Panc1 (cell line): ENCODE measurements at regions of chr7 and their contacts with region 1.

Region 1: DNA sequence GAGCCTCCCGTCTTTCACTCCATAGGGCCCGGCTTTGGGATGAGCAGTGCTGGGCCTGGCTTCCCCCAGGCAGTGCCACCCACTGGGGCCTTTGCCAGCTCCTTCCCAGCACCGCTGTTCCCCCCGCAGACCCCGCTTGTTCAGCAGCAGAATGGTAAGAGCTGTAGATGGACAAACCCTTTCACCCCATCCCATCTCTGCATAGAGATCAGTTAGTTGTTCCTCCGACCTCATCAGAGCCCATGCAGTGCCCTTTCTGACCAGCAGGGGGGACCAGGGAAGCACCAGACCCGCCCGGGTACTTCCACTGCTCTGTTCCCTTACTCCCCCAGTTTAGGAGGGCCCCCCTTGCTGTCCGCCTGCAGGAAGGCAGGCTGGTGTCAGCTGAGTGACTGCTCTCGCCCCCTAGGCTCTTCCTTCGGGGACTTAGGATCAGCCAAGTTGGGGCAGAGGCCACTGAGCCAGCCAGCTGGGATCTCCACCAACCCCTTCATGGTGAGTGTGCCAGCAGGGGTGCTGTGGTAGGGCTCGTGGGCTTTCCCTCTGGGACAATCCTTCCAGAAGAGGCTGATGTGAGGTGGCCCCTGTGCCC is 9.8 kb downstream of the SAP25 start:
- DNase-seq: peak; percentile 53
- ATAC-seq: peak; percentile 71
- H3K4me3 ChIP-seq: no peak overlapping the region
- H3K27ac ChIP-seq: 0 out of 2 replicates have a peak overlapping the region, but pooled peaks have one; percentile 17
- H3K4me1 ChIP-seq: peaks cover 23% of the 10 kb centered on the region
- H3K27me3 ChIP-seq: no peaks in the 10 kb centered on the region
- CTCF ChIP-seq: peak; percentile 97

Region 2: GRCh38 chr7:100428967-100429636 is 134.8 kb before region 1 on chr7:
- CTCF ChIA-PET with region 1: interaction called, 4 read pairs
- POLR2A ChIA-PET with region 1: interaction called, 12 read pairs
- in situ Hi-C with region 1: no loop called
- intact Hi-C with region 1: no loop called
- DNase-seq: peak; percentile 99
- ATAC-seq: peak; percentile 77
- H3K4me3 ChIP-seq: peak overlapping the region; percentile 66 to 92
- H3K27ac ChIP-seq: peak overlapping the region; percentile 98
- H3K4me1 ChIP-seq: peaks cover 39% of the 10 kb centered on the region
- H3K27me3 ChIP-seq: no peaks in the 10 kb centered on the region
- CTCF ChIP-seq: no peak

Region 3: DNA sequence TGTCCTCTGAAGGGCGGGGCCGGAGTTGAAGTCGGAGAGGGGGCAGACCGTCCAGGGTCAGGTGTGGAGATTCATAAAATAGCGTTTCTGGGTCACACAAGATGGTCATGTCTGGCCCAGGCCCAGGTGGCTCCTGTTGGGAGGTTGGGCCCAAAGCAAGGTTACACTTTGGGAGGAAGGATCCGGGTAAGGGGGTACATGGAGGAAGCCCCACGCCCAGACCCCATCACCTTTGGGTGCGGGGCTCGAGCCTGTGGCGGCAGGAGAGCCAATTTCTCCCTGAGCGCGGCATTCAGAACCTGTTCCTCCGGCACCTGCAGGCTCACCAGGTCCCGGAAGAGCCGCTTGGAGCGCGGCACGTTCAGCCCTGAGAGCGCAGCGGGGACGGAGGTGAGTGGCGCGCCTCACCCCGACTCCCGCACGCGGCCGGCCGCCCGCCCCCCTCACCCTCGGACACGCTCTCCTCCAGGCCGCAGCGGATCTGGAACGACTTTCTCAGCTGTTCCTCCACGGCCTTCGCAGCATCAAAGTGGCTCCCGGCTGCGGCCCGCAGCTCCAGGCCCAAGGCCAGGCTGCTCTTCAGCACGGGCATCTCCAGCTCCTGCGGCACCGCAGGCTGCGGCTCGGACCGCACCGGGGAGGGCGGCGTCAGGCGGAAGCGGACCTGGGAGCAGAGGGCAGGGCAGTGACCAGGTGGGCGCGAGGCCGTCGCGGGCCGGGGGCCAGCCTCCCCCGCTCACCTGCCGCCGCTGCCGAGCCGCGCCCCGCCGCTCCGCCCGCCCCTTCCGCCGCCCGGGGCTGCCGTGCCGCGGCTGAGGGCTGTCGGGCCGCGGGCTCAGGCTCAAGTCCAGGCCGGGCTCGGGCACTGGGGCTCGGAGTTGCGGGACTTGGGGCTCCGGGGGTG is 128.3 kb before region 1 on chr7:
- CTCF ChIA-PET with region 1: interaction called, 4 read pairs
- POLR2A ChIA-PET with region 1: interaction called, 12 read pairs
- in situ Hi-C with region 1: no loop called
- intact Hi-C with region 1: no loop called
- DNase-seq: no peak
- ATAC-seq: peak; percentile 68
- H3K4me3 ChIP-seq: peak overlapping the region; percentile 67 to 82
- H3K27ac ChIP-seq: peak overlapping the region; percentile 86
- H3K4me1 ChIP-seq: peaks cover 43% of the 10 kb centered on the region
- H3K27me3 ChIP-seq: no peaks in the 10 kb centered on the region
- CTCF ChIP-seq: no peak